PC-9 (cell line): ENCODE measurements at regions of chr6 and their contacts with region 1.

Region 1: GRCh38 chr6:112886415-112886814 is 539.3 kb downstream of the RFPL4B start:
- DNase-seq: no peak
- H3K4me3 ChIP-seq: no peak overlapping the region
- H3K27ac ChIP-seq: no peak overlapping the region
- H3K4me1 ChIP-seq: no peaks in the 10 kb centered on the region
- H3K27me3 ChIP-seq: no peaks in the 10 kb centered on the region
- CTCF ChIP-seq: no peak

Region 2: GRCh38 chr6:112899541-112899940 is 13.1 kb after region 1 on chr6:
- CTCF ChIA-PET with region 1: no interaction called
- POLR2A ChIA-PET with region 1: interaction called, 14 read pairs
- intact Hi-C with region 1: no loop called
- DNase-seq: no peak
- H3K4me3 ChIP-seq: no peak overlapping the region
- H3K27ac ChIP-seq: no peak overlapping the region
- H3K4me1 ChIP-seq: no peaks in the 10 kb centered on the region
- H3K27me3 ChIP-seq: no peaks in the 10 kb centered on the region
- CTCF ChIP-seq: no peak

Region 3: GRCh38 chr6:112906726-112907125 is 20.3 kb after region 1 on chr6:
- CTCF ChIA-PET with region 1: no interaction called
- POLR2A ChIA-PET with region 1: interaction called, 23 read pairs
- intact Hi-C with region 1: no loop called
- DNase-seq: no peak
- H3K4me3 ChIP-seq: no peak overlapping the region
- H3K27ac ChIP-seq: no peak overlapping the region
- H3K4me1 ChIP-seq: peaks cover 9% of the 10 kb centered on the region
- H3K27me3 ChIP-seq: no peaks in the 10 kb centered on the region
- CTCF ChIP-seq: no peak